ENCODE measurements at regions of chr13 and their contacts with region 1.

Region 1: GRCh38 chr13:31742097-31742734 is 2.9 kb downstream of the RXFP2 start:
- DNase-seq: peak; percentile 65
- ATAC-seq: peak; percentile 95

Region 2: GRCh38 chr13:31431722-31432137 is 310.5 kb before region 1 on chr13:
- intact Hi-C with region 1: loop called (anchors 5 kb)
- DNase-seq: peak; percentile 59
- ATAC-seq: peak; percentile 81